ENCODE measurements at regions of chr17 and their contacts with region 1.

Region 1: DNA sequence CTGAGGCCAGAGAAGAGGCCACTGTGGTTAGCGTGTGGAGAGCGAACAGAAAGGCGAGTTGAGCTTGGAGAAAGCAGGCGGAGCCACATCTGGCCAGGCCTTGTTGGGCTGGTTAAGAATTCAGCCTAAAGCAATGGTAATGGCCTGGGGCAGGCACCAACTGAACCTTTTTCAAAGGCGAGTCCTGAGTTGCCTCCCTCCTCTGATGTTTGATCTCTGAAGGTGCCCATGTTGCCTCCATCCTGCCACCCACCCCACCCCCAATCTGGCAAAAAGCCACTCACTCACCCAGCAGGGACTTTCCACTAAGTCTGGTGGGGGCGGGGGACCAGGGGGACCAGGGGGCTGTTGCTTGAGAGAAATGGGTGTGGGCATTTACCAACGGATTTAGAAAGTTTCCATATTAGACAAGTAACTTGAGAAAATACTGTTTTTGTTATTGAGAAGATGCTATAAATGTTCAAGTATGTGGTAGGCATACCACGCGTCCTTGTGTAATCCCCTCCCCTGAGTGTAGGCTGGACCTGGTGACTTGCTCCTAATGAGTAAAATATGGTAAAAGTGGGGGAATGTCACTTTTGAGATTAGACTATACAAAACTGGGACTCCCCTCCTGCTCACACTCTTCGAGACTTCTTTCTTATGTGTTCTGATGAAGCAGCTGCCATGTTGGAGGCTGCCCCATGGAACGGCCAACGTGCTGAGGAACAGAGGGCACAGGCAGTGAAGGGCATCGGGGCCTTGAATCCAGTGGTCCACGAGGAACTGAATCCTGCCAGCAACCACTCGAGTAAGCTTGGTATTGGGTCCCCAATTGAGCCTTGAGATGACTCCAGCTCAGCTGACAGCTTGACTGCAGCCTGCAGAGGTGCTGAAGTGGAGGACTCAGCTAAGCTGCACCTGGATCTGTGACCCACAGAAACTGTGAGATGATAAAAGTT is 29.9 kb upstream of the TNS4 start:
- DNase-seq: no peak
- ATAC-seq: no peak
- H3K4me3 ChIP-seq: no peak overlapping the region
- H3K27ac ChIP-seq: no peak overlapping the region
- H3K4me1 ChIP-seq: no peaks in the 10 kb centered on the region
- H3K27me3 ChIP-seq: no peaks in the 10 kb centered on the region
- CTCF ChIP-seq: no peak

Region 2: DNA sequence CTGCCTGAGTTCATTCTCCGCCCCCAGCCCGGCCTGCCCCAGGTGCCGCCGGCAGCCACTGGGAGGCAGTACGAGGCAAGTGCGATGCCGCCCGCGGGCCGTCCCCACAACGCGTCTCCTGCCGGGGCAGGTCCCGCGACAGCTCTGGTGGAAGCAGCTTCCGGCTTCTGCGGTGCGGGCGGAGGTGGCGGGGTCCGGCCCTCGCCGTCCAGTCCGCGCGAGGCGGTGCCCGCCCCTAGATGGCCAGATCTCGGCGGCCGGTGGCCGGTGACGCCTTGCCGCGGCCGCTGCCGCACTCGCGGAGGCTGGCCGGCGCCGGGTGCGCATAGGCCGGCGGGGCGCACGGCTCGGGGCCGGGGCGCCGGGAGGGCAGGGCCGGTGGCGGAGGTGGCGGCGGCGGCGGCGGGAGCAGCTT is 168.6 kb before region 1 on chr17:
- CTCF ChIA-PET with region 1: interaction called, 11 read pairs
- POLR2A ChIA-PET with region 1: no interaction called
- in situ Hi-C with region 1: no loop called
- intact Hi-C with region 1: loop called (anchors 5 kb)
- DNase-seq: no peak
- ATAC-seq: peak; percentile 87
- H3K4me3 ChIP-seq: peak overlapping the region; percentile 50 to 55
- H3K27ac ChIP-seq: no peak overlapping the region
- H3K4me1 ChIP-seq: peaks cover 7% of the 10 kb centered on the region; the same call in 1 of the 2 replicates
- H3K27me3 ChIP-seq: no peaks in the 10 kb centered on the region
- CTCF ChIP-seq: peak; percentile 93

Region 3: GRCh38 chr17:40417609-40418427 is 113.5 kb before region 1 on chr17 and contains the start of gene TOP2A:
- CTCF ChIA-PET with region 1: interaction called, 19 read pairs
- POLR2A ChIA-PET with region 1: no interaction called
- in situ Hi-C with region 1: no loop called
- intact Hi-C with region 1: no loop called
- DNase-seq: peak; percentile 99
- ATAC-seq: peak; percentile 97
- H3K4me3 ChIP-seq: peak within 1 kb of the TSS; percentile 83 to 86
- H3K27ac ChIP-seq: peak within 1 kb of the TSS; percentile 95
- H3K4me1 ChIP-seq: peaks cover 18% of the 10 kb centered on the region
- H3K27me3 ChIP-seq: no peaks in the 10 kb centered on the region
- CTCF ChIP-seq: no peak
- total RNA-seq, gene TOP2A: 230 TPM

Region 4: DNA sequence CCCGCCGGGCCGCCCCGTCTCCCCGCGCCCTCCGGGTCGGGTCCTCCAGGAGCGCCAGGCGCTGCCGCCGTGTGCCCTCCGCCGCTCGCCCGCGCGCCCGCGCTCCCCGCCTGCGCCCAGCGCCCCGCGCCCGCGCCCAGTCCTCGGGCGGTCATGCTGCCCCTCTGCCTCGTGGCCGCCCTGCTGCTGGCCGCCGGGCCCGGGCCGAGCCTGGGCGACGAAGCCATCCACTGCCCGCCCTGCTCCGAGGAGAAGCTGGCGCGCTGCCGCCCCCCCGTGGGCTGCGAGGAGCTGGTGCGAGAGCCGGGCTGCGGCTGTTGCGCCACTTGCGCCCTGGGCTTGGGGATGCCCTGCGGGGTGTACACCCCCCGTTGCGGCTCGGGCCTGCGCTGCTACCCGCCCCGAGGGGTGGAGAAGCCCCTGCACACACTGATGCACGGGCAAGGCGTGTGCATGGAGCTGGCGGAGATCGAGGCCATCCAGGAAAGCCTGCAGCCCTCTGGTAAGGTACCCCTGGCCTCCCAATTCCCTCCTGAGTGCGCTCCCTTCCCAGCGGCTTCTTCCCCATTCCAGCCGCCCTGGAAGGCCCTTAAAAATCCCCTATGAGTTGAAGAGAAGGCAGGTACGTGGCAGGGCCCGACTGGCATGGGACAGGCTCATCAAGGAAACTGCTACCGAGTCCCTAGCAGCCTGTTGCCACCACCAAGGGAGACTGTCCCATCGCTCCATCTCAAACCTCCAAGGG is 87.6 kb before region 1 on chr17:
- CTCF ChIA-PET with region 1: interaction called, 24 read pairs
- POLR2A ChIA-PET with region 1: interaction called, 4 read pairs
- in situ Hi-C with region 1: no loop called
- intact Hi-C with region 1: loop called (anchors 1 kb)
- DNase-seq: no peak
- ATAC-seq: peak; percentile 89
- H3K4me3 ChIP-seq: peak overlapping the region; percentile 41 to 63
- H3K27ac ChIP-seq: no peak overlapping the region
- H3K4me1 ChIP-seq: peaks cover 11% of the 10 kb centered on the region
- H3K27me3 ChIP-seq: no peaks in the 10 kb centered on the region
- CTCF ChIP-seq: peak; percentile 82

Region 5: DNA sequence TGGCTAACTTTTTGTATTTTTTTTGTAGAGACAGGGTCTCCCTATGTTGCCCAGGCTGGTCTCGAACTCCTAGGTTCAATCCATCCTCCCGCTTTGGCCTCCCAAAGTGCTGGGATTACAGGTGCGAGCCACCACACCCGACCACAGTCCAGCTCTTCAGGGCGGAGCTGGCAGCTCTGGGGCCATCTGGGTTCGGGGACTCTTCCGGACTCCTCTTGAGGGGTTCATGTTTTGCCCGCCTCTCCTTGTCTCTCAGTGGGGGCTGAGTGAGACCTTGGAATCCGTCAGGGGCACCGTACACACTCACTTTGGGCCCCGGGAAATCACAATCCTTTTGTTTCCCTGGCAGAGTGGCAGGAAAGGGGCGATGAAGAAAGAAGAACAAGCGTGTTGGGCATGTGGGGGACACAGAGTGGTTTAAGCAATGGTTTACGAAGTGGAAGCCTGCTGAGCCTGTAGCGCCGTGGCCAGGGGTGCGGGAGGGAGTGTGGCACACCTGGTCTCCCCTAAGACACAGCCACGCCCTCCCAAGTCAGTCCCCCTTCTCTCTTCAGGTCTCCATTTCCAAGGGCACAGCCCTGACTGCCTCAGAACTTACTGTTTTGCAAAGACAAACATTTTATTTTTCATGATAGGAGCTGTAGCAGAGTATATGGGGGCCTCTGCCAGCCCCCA is 56.0 kb before region 1 on chr17:
- CTCF ChIA-PET with region 1: interaction called, 25 read pairs
- POLR2A ChIA-PET with region 1: interaction called, 6 read pairs
- in situ Hi-C with region 1: no loop called
- intact Hi-C with region 1: no loop called
- DNase-seq: no peak
- ATAC-seq: no peak
- H3K4me3 ChIP-seq: no peak overlapping the region
- H3K27ac ChIP-seq: no peak overlapping the region
- H3K4me1 ChIP-seq: no peaks in the 10 kb centered on the region
- H3K27me3 ChIP-seq: no peaks in the 10 kb centered on the region
- CTCF ChIP-seq: no peak

Region 6: GRCh38 chr17:40499551-40500174 is 31.7 kb before region 1 on chr17:
- CTCF ChIA-PET with region 1: interaction called, 8 read pairs
- POLR2A ChIA-PET with region 1: no interaction called
- in situ Hi-C with region 1: loop called (anchors 5 kb)
- intact Hi-C with region 1: no loop called
- DNase-seq: no peak
- ATAC-seq: peak; percentile 85
- H3K4me3 ChIP-seq: peak overlapping the region in 1 of 2 experiments; percentile 41; a peak in 3 of 4 replicates
- H3K27ac ChIP-seq: no peak overlapping the region
- H3K4me1 ChIP-seq: peaks cover 10% of the 10 kb centered on the region
- H3K27me3 ChIP-seq: no peaks in the 10 kb centered on the region
- CTCF ChIP-seq: no peak

Region 7: DNA sequence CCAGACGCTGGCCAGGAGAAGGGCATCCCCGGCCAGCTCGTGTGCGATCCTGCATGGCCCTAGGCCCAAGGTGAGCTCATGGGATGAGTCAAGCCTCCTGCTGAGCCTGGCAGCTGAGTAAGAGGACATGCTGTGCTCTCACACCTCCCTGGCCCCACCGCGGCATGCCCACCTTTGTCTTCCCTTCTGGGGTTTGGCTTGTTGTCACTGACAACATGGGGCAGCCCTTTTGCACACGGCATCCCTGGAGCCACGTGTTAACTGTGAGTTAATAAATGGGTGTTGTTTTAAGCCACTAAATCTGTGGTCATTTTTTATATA is 21.0 kb before region 1 on chr17:
- CTCF ChIA-PET with region 1: interaction called, 11 read pairs
- POLR2A ChIA-PET with region 1: no interaction called
- in situ Hi-C with region 1: no loop called
- intact Hi-C with region 1: no loop called
- DNase-seq: no peak
- ATAC-seq: peak; percentile 89
- H3K4me3 ChIP-seq: no peak overlapping the region
- H3K27ac ChIP-seq: no peak overlapping the region; the same call in 1 of the 2 replicates
- H3K4me1 ChIP-seq: peaks cover 8% of the 10 kb centered on the region
- H3K27me3 ChIP-seq: no peaks in the 10 kb centered on the region
- CTCF ChIP-seq: no peak

Measured in Panc1 (cell line).